WTC11 (cell line): ENCODE measurements at regions of chr12 and their contacts with region 1.

Region 1: DNA sequence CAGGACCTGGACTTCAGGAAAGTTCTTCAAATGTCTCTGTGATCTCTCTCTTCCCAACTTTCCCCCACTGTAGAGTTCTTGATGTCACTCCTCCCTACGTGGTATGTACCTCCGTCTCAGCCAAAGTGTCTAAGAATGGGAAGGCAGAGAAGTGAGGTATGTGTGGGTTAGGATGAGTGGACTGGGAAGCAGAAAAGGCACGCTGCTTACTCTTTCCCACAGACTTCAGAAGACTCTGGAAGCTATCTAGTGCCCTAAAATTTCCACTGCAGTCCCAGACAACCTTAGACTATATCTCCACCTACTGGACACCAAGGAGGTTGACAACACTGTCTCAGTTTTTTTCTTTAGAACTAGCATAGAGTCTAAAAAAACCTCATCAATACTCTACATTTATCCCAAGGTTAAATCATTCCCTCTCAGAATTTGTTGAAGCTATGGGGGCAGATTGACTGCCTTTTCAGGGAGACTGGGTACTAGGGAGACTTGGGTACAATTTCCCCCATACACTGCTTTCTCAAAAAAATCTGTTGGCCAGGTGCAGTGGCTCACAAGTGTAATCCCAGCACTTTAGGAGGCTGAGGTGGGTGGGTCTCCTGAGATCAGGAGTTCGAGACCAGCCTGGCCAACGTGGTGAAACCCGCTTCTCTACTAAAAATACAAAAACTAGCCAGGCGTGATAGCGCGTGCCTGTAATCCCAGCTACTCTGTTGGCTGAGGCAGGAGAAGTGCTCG is 20.6 kb upstream of the ITGA5 start:
- DNase-seq: no peak
- ATAC-seq: peak; percentile 88
- H3K4me3 Mint-ChIP-seq: no peak overlapping the region
- H3K27ac Mint-ChIP-seq: no peak overlapping the region
- H3K4me1 Mint-ChIP-seq: peaks cover 7% of the 10 kb centered on the region
- H3K27me3 Mint-ChIP-seq: peaks cover 99% of the 10 kb centered on the region
- CTCF ChIP-seq: peak; percentile 74

Region 2: GRCh38 chr12:54368709-54369583 is 70.7 kb before region 1 on chr12:
- CTCF ChIA-PET with region 1: interaction called, 10 read pairs
- POLR2A ChIA-PET with region 1: no interaction called
- DNase-seq: peak; percentile 90
- ATAC-seq: peak; percentile 49
- H3K4me3 Mint-ChIP-seq: peak overlapping the region; percentile 75
- H3K27ac Mint-ChIP-seq: no peak overlapping the region
- H3K4me1 Mint-ChIP-seq: peaks cover 24% of the 10 kb centered on the region
- H3K27me3 Mint-ChIP-seq: peaks cover 49% of the 10 kb centered on the region
- CTCF ChIP-seq: peak; percentile 73

Region 3: GRCh38 chr12:54411391-54412241 is 28.1 kb before region 1 on chr12:
- CTCF ChIA-PET with region 1: interaction called, 18 read pairs
- POLR2A ChIA-PET with region 1: no interaction called
- DNase-seq: peak; percentile 59
- ATAC-seq: peak; percentile 91
- H3K4me3 Mint-ChIP-seq: no peak overlapping the region
- H3K27ac Mint-ChIP-seq: no peak overlapping the region; the same call in 1 of the 2 replicates
- H3K4me1 Mint-ChIP-seq: peaks cover 13% of the 10 kb centered on the region
- H3K27me3 Mint-ChIP-seq: peaks cover 7% of the 10 kb centered on the region
- CTCF ChIP-seq: no peak

Region 4: DNA sequence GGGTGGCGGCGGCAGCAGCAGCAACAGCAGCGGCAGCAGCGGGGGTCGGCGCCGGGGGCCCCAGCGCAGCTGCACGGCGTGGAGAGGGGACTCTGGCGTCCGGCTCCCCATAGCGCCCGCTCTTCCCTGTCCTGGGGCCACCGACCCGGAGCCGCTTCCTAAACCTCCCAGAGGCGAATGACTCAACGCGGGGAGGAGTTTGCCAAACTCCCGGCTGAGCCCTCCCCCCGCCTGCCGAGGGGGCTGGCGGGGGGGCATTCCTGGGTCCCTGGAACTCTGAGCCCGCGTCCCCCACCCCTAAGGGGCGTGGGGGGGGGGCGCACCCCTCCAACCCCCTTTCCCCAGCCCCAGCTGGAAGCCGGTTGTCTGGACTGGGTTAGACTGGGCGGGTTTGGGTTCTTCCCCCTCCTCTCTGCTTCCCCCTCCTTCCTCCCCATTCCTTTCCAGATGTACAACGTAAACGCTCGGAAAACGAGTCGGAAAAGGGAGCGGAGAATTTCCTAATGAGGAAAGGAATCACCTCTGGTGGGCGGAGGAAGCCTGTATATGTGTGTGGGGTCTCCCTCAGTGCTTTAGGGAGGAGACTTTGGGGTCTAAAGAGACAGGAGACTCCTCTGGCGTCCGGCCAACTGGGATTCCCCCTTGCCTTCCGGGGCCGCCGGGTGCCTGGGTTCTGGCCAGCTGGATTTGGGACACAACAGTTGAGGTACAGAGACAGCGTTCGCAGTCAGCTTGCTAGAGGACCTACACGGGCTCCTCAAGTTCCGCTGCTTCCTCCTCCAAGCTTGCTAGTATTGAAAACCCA is 20.4 kb before region 1 on chr12 and contains the start of gene ITGA5:
- CTCF ChIA-PET with region 1: interaction called, 18 read pairs
- POLR2A ChIA-PET with region 1: no interaction called
- DNase-seq: peak; percentile 62
- ATAC-seq: peak; percentile 40
- H3K4me3 Mint-ChIP-seq: peak within 1 kb of the TSS; percentile 84
- H3K27ac Mint-ChIP-seq: no peak within 1 kb of the TSS
- H3K4me1 Mint-ChIP-seq: peaks cover 34% of the 10 kb centered on the region
- H3K27me3 Mint-ChIP-seq: peaks cover 63% of the 10 kb centered on the region
- CTCF ChIP-seq: no peak
- total RNA-seq, gene ITGA5: 19.3 to 21.9 TPM (median 20.8 TPM) in 3 replicates

Region 5: DNA sequence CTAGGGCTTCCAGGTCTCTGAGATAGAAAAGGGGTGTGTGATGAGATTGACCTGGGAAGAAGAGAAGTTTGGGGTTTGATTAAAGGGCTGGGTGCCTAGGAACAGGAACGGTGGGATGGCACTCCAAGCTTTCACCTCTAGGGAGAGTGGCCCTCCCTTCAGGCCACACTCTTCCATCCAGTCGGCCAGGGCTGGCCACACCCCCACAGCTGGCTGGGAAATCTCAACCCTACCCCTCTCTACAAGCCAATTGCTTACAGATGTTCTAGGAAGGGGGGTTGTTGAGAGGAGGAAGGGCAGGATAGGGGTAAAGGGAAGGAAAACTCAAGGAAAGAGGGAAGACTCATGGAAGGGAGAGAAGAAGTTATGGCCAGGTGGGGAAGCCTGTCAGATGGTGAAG is 14.0 kb before region 1 on chr12:
- CTCF ChIA-PET with region 1: interaction called, 24 read pairs
- POLR2A ChIA-PET with region 1: interaction called, 4 read pairs
- DNase-seq: no peak
- ATAC-seq: peak; percentile 50
- H3K4me3 Mint-ChIP-seq: no peak overlapping the region
- H3K27ac Mint-ChIP-seq: no peak overlapping the region
- H3K4me1 Mint-ChIP-seq: peaks cover 47% of the 10 kb centered on the region
- H3K27me3 Mint-ChIP-seq: peaks cover 91% of the 10 kb centered on the region
- CTCF ChIP-seq: no peak

Region 6: DNA sequence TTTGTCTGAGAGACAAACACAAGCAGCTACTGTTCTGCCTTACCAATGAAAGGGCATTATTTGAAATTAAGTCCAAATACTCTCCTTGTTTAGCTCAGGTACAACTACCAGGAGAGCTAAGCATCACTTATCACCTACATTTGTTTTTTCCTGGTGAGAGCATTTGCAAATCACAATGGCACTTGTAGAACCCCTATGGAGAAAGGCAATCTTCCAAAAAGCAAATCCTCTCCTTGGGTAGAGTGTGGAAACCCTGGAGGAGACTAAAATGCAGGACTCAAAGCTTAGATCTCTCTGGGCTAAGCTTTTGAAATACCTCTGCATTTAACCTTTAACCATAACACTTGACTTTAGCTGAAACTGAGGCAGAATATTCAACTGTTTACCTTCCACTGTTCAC is 12.9 kb after region 1 on chr12:
- CTCF ChIA-PET with region 1: interaction called, 13 read pairs
- POLR2A ChIA-PET with region 1: no interaction called
- DNase-seq: no peak
- ATAC-seq: peak; percentile 87
- H3K4me3 Mint-ChIP-seq: no peak overlapping the region
- H3K27ac Mint-ChIP-seq: no peak overlapping the region
- H3K4me1 Mint-ChIP-seq: peaks cover 18% of the 10 kb centered on the region
- H3K27me3 Mint-ChIP-seq: peaks cover 100% of the 10 kb centered on the region
- CTCF ChIP-seq: no peak